ENCODE measurements at regions of chr1 and their contacts with region 1.

Region 1: DNA sequence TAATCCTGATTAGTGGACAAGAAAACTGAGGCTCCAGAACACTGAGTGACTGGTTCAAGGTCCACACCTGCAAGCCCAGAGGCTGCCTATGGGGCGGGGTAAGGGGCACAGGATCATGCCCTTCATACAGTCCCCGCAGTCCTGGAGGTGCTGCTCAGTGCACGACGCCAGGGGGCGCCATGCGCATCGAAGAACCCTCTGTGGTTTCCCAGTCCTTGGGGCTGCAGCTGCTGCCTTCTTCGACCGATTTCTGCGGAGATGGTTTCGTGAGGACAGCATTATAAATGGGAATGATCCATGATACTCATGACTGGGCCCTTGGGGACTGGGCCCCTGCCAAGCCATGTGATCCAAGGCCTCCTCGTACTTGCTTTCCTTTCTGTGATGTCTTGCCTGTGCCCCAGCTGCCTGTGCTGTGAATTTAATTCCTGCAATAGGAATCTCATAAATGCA is 37.1 kb upstream of the ARHGEF10L start:
- DNase-seq: peak; percentile 88 to 99
- H3K4me3 ChIP-seq: no peak overlapping the region
- H3K27ac ChIP-seq: no peak overlapping the region
- H3K4me1 ChIP-seq: peaks cover 0 to 2% (median 0%) of the 10 kb centered on the region in 4 experiments; a peak in 2 of 7 replicates
- H3K27me3 ChIP-seq: no peaks in the 10 kb centered on the region
- CTCF ChIP-seq: peak; percentile 98
- EP300 ChIP-seq: no peak
- POLR2A ChIP-seq: no peak
- RAD21 ChIP-seq: peak; percentile 98 to 99

Region 2: DNA sequence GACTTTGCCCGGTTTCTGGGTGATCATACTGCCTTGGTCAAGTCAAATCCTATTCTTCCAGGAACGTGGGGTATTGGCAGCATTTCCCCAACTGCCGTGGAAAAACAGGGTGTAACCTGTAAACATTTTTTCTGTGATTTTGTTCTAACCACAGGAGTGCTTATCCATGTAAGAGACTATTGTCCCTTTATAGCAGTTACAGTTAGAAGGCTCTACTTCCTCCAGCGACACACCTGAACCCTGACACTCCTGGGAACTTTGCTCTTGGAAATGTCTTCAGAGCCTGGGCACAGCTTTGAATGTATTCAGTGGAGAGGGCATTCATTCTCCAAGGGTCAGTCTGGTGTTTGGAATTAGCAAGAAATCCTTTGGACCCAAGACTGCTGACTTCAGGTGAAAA is 10.8 kb after region 1 on chr1:
- CTCF ChIA-PET with region 1: interaction called, 59 read pairs
- POLR2A ChIA-PET with region 1: interaction called, 4 read pairs
- DNase-seq: no peak
- H3K4me3 ChIP-seq: no peak overlapping the region
- H3K27ac ChIP-seq: no peak overlapping the region
- H3K4me1 ChIP-seq: peaks cover 0 to 12% (median 6%) of the 10 kb centered on the region in 4 experiments; a peak in 6 of 7 replicates
- H3K27me3 ChIP-seq: no peaks in the 10 kb centered on the region
- CTCF ChIP-seq: no peak
- EP300 ChIP-seq: no peak
- POLR2A ChIP-seq: no peak
- RAD21 ChIP-seq: no peak

Region 3: GRCh38 chr1:17520071-17520813 is 17.9 kb after region 1 on chr1:
- CTCF ChIA-PET with region 1: interaction called, 59 read pairs
- POLR2A ChIA-PET with region 1: interaction called, 5 read pairs
- DNase-seq: no peak
- H3K4me3 ChIP-seq: no peak overlapping the region
- H3K27ac ChIP-seq: no peak overlapping the region
- H3K4me1 ChIP-seq: peaks cover 6 to 33% (median 23%) of the 10 kb centered on the region in 4 experiments
- H3K27me3 ChIP-seq: no peaks in the 10 kb centered on the region
- CTCF ChIP-seq: no peak
- EP300 ChIP-seq: no peak
- POLR2A ChIP-seq: no peak
- RAD21 ChIP-seq: no peak

Region 4: DNA sequence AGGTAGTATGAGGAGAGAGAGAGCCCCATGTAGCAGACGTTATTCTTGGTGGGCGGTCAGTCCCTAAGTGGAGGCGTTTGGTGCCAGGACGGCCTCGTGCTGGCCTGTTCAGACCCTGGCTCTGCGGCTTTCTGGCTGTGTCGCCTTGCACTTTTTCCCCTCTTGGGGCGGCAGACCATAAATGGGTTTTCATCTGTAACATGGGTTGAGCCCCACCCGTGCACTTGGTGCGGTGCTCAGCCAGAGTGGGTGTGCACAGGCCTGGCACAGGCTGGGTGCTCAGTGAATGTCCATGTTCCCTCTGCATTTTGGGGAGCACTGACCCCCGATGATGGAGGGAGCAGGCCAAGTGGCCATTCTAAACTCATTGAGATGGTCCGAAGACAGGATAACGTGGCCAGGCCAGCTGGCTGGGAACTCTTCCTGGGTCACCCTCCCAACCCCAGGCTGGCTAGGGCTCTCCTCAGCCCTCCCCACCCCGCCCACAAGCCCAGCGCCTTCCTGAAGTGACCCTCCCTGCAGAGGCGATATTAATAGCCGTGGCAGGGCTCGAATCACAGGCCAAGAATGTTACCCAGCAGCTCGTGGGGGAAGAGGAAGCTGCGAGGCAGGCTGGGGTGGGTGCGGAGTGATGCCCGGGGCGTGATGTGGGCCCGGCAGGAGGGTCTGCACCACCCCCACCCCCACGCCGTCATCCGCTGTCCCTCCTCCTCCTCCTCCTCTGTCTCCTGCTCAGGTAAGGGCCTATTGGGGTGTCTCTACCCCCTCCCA is 115.6 kb after region 1 on chr1:
- CTCF ChIA-PET with region 1: interaction called, 1,640 read pairs
- POLR2A ChIA-PET with region 1: no interaction called
- DNase-seq: no peak
- H3K4me3 ChIP-seq: no peak overlapping the region
- H3K27ac ChIP-seq: no peak overlapping the region
- H3K4me1 ChIP-seq: no peaks in the 10 kb centered on the region
- H3K27me3 ChIP-seq: no peaks in the 10 kb centered on the region
- CTCF ChIP-seq: peak in 1 of 3 experiments; percentile 1; a peak in 1 of 4 replicates
- EP300 ChIP-seq: no peak
- POLR2A ChIP-seq: no peak
- RAD21 ChIP-seq: no peak

Region 5: DNA sequence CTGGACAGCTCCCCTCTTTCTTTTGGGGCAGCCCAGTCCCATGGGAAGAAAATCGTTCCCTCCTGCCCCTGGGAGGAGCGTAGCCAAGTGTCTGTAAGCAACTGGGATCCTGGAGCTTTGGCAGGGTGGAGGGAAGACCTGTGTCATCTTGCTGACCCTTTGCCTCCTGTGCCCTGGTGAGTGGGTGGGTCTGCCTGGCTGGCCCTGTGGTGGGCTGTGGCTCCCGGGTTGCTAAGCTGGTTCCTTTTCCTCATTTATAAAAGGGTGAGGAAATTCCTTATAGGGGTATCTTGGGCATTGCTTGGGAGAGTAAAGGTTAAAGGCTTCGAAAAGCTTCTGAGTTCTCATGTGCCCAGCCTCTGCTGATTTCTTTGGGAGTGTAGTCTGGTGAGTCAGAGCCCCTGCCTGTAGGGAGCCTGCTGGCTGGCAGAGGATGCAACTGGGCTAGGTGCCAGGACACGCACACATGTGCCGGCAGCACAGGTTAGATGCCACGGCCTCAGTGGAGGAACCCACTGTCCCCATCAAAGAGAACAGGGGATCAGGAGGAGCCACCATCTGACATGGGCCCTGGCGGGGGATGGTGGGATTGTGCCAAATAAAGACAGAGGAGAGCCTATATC is 122.4 kb after region 1 on chr1:
- CTCF ChIA-PET with region 1: interaction called, 11 read pairs
- POLR2A ChIA-PET with region 1: no interaction called
- DNase-seq: no peak
- H3K4me3 ChIP-seq: no peak overlapping the region
- H3K27ac ChIP-seq: no peak overlapping the region
- H3K4me1 ChIP-seq: peaks cover 0 to 2% (median 0%) of the 10 kb centered on the region in 4 experiments; a peak in 1 of 7 replicates
- H3K27me3 ChIP-seq: no peaks in the 10 kb centered on the region
- CTCF ChIP-seq: no peak
- EP300 ChIP-seq: no peak
- POLR2A ChIP-seq: no peak
- RAD21 ChIP-seq: no peak

Measured in H1 (cell line).